PC-3 (cell line): ENCODE measurements at regions of chr2 and their contacts with region 1.

Region 1: GRCh38 chr2:165497659-165498317 is 28.3 kb downstream of the CSRNP3 start:
- DNase-seq: no peak
- ATAC-seq: no peak
- H3K4me3 ChIP-seq: no peak overlapping the region
- H3K27ac ChIP-seq: no peak overlapping the region
- H3K4me1 ChIP-seq: no peaks in the 10 kb centered on the region
- H3K27me3 ChIP-seq: no peaks in the 10 kb centered on the region
- CTCF ChIP-seq: no peak

Region 2: GRCh38 chr2:165440367-165440766 is 57.4 kb before region 1 on chr2:
- CTCF ChIA-PET with region 1: no interaction called
- POLR2A ChIA-PET with region 1: interaction called, 50 read pairs
- intact Hi-C with region 1: no loop called
- DNase-seq: no peak
- ATAC-seq: peak; percentile 33
- H3K4me3 ChIP-seq: no peak overlapping the region
- H3K27ac ChIP-seq: no peak overlapping the region
- H3K4me1 ChIP-seq: no peaks in the 10 kb centered on the region
- H3K27me3 ChIP-seq: no peaks in the 10 kb centered on the region
- CTCF ChIP-seq: no peak